Natural killer cell (primary cell): ENCODE measurements at regions of chr13 and their contacts with region 1.

Region 1: DNA sequence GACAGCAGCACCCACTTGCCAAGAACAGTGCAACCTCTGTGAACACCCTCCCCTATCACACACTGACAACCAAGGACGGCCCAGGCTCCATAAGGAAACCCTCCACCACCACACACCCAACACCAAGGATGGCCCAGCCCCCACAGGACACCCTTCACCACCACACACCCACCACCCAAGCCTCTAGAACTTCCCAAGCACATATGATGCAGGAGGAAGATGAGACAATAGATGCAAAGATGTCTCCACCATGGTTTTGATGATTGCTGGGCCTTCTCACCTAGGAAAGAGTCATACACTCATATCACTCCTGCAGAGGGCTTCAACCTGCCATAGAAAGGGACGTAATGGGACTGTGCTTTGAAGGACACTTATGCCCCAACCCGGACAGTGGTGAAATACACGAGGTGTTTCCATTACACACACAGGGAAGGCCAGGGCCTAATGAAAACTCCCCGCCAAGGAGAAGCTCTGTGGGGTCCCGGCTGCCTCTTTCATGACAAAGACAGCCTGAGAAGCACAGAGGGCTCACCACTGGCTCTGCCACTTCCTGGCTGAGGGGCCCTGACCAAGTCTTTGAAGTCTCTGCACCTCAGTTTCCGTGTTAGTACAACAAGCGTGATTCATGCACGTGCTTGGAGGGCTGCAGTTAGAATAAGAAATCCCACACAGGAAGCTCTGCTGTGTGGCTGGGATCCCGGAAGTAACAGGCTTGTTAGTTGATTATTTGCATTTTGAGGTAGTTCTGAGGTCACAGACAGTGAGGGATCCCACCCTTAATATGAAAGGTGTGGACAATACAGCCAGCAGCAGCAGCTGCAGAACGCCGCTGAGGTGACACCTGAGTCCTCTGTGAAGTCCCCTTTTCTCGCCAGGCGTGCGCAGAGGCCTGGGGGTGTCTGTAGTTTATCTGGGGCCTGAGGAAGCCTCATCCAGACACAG is 61.9 kb upstream of the ATP12A start:
- DNase-seq: peak; percentile 79 to 89
- ATAC-seq: peak; percentile 79 to 91 (median 85)
- H3K4me3 ChIP-seq: no peak overlapping the region
- H3K4me3 Mint-ChIP-seq: peak overlapping the region; percentile 56
- H3K27ac ChIP-seq: peak overlapping the region; percentile 92
- H3K27ac Mint-ChIP-seq: peak overlapping the region; percentile 98
- H3K4me1 ChIP-seq: peaks cover 72% of the 10 kb centered on the region
- H3K4me1 Mint-ChIP-seq: peaks cover 45 to 53% of the 10 kb centered on the region in 2 donors
- H3K27me3 ChIP-seq: no peaks in the 10 kb centered on the region
- H3K27me3 Mint-ChIP-seq: no peaks in the 10 kb centered on the region
- CTCF ChIP-seq: no peak

Region 2: GRCh38 chr13:24254146-24254841 is 364.0 kb before region 1 on chr13:
- intact Hi-C with region 1: loop called (anchors 5 kb)
- DNase-seq: peak; percentile 55 to 88
- ATAC-seq: peak; percentile 49 to 52 (median 51)
- H3K4me3 ChIP-seq: peak overlapping the region; percentile 72
- H3K4me3 Mint-ChIP-seq: peak overlapping the region; percentile 98
- H3K27ac ChIP-seq: peak overlapping the region; percentile 81
- H3K27ac Mint-ChIP-seq: peak overlapping the region; percentile 90 to 99
- H3K4me1 ChIP-seq: peaks cover 62% of the 10 kb centered on the region
- H3K4me1 Mint-ChIP-seq: peaks cover 76 to 88% of the 10 kb centered on the region in 2 donors
- H3K27me3 ChIP-seq: no peaks in the 10 kb centered on the region
- H3K27me3 Mint-ChIP-seq: no peaks in the 10 kb centered on the region
- CTCF ChIP-seq: no peak

Region 3: GRCh38 chr13:24270639-24271141 is 347.6 kb before region 1 on chr13:
- intact Hi-C with region 1: loop called (anchors 2 kb)
- DNase-seq: peak; percentile 63 to 82
- ATAC-seq: peak; percentile 15 to 56 (median 30)
- H3K4me3 ChIP-seq: peak overlapping the region; percentile 45
- H3K4me3 Mint-ChIP-seq: peak overlapping the region; percentile 94
- H3K27ac ChIP-seq: peak overlapping the region; percentile 96
- H3K27ac Mint-ChIP-seq: peak overlapping the region; percentile 95 to 98
- H3K4me1 ChIP-seq: peaks cover 81% of the 10 kb centered on the region
- H3K4me1 Mint-ChIP-seq: peaks cover 90 to 91% of the 10 kb centered on the region in 2 donors
- H3K27me3 ChIP-seq: no peaks in the 10 kb centered on the region
- H3K27me3 Mint-ChIP-seq: peaks cover 3 to 8% of the 10 kb centered on the region in 2 donors
- CTCF ChIP-seq: no peak

Region 4: DNA sequence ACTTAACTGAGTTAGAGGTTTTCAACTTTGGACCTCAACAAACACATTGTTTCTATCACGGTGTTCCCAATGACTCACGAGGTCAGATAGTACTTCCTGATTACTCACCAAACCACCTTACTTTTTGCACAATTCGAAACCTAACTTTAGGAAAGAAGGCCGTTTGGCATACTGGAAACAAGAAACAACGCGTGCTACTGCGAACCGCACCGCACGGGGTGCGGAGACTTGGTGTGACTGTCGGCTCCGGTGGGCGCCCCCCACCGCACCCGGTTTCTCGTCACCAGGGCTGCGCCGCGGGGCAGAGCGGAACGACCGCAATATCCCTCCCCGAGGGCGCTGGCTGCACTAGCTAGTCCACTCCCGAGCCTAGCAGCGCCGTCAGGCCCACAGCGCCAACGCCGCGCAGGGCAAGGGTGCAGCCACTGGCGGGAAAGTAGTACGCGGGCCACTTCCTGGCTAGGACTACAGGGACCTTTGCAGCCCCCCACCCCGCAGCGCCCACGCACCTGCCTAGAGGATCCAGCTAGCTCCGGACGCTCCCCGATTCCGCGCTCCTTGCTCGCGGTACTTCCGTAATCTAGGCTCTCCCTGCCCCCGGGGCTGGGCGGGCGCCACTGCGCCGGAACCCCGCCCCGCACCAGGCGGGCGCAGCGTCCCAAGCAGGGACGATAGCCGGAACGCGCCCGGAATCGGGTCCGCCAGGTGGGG is 105.9 kb before region 1 on chr13 and contains the start of gene PARP4:
- intact Hi-C with region 1: loop called (anchors 1 kb)
- DNase-seq: peak; percentile 65 to 82
- ATAC-seq: peak; percentile 71 to 86 (median 80)
- H3K4me3 ChIP-seq: peak within 1 kb of the TSS; percentile 96
- H3K4me3 Mint-ChIP-seq: peak within 1 kb of the TSS; percentile 97
- H3K27ac ChIP-seq: peak within 1 kb of the TSS; percentile 93
- H3K27ac Mint-ChIP-seq: peak within 1 kb of the TSS; percentile 92
- H3K4me1 ChIP-seq: peaks cover 12% of the 10 kb centered on the region
- H3K4me1 Mint-ChIP-seq: peaks cover 37 to 54% of the 10 kb centered on the region in 2 donors
- H3K27me3 ChIP-seq: no peaks in the 10 kb centered on the region
- H3K27me3 Mint-ChIP-seq: no peaks in the 10 kb centered on the region
- CTCF ChIP-seq: no peak
- total RNA-seq, gene PARP4: 83.5 to 90.1 (median 84.0) TPM

Region 5: GRCh38 chr13:24632382-24633121 is 14.3 kb after region 1 on chr13:
- intact Hi-C with region 1: no loop called
- DNase-seq: no peak
- ATAC-seq: no peak
- H3K4me3 ChIP-seq: no peak overlapping the region
- H3K4me3 Mint-ChIP-seq: no peak overlapping the region
- H3K27ac ChIP-seq: no peak overlapping the region
- H3K27ac Mint-ChIP-seq: no peak overlapping the region
- H3K4me1 ChIP-seq: peaks cover 9% of the 10 kb centered on the region
- H3K4me1 Mint-ChIP-seq: peaks cover 30% of the 10 kb centered on the region in 2 donors
- H3K27me3 ChIP-seq: no peaks in the 10 kb centered on the region
- H3K27me3 Mint-ChIP-seq: no peaks in the 10 kb centered on the region
- CTCF ChIP-seq: no peak

Region 6: DNA sequence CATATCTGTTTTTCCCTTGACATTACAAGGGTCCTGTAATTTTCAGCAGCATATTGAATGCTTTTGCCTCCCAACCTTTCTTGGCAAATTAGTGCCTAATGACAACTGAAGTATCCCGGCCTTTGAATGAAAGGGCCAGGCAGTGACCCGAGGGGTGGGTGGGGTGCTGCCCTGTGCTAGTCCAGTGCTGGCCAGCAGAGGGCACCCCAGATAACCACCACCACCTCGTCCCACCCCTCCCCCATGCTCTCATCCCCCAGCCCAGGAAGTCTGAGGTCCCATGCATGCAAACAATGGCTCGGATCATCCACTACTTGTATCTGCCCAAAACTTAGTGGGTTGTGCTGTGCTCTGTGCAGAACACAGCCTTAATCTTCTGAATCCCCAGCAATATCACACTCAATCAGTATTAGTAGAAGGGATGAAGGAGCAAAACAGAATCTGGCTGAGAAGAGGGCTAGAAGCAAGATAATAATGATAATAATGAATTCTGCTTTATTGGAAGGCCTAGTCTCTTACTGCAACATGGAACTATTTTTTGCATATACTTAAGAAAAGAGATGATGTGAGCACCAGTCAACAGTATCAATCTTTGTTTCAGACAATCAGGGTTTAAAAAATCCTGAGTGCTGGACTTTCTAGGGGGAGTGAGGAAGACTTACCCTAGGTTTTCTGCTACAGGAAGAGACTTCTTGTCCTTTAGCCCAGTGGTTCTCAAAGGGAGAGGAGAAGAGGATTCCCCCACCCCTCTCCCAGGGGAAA is 65.7 kb after region 1 on chr13:
- intact Hi-C with region 1: loop called (anchors 5 kb)
- DNase-seq: peak; percentile 31 to 81
- ATAC-seq: peak; percentile 78 to 81 (median 80)
- H3K4me3 ChIP-seq: no peak overlapping the region
- H3K4me3 Mint-ChIP-seq: peak overlapping the region; percentile 33
- H3K27ac ChIP-seq: no peak overlapping the region
- H3K27ac Mint-ChIP-seq: no peak overlapping the region
- H3K4me1 ChIP-seq: peaks cover 36% of the 10 kb centered on the region
- H3K4me1 Mint-ChIP-seq: peaks cover 32 to 40% of the 10 kb centered on the region in 2 donors
- H3K27me3 ChIP-seq: peaks cover 37% of the 10 kb centered on the region
- H3K27me3 Mint-ChIP-seq: peaks cover 46 to 52% of the 10 kb centered on the region in 2 donors
- CTCF ChIP-seq: peak; percentile 76

Region 7: DNA sequence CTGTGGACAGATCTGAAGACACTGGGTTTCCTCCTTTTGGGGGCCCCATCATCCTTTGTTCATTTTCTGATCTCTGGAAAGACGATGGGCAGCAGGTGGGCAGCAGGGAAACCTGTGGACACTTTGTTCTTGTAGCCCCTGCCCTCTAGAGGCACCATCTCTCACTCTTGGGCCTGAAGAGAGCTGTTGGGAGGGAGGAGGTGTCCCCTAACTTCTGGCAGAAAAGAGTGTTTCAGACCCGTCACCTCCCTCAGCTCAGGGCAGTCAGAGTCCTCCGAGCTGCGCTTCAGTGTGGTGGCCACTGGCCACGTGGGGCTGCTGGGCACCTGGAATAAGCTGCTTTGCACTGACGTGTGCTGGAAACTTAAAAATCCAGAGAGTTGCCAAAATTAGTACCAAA is 118.8 kb after region 1 on chr13:
- intact Hi-C with region 1: no loop called
- DNase-seq: no peak
- ATAC-seq: no peak
- H3K4me3 ChIP-seq: no peak overlapping the region
- H3K4me3 Mint-ChIP-seq: no peak overlapping the region
- H3K27ac ChIP-seq: no peak overlapping the region
- H3K27ac Mint-ChIP-seq: no peak overlapping the region
- H3K4me1 ChIP-seq: no peaks in the 10 kb centered on the region
- H3K4me1 Mint-ChIP-seq: no peaks in the 10 kb centered on the region
- H3K27me3 ChIP-seq: no peaks in the 10 kb centered on the region
- H3K27me3 Mint-ChIP-seq: no peaks in the 10 kb centered on the region
- CTCF ChIP-seq: no peak

Region 8: GRCh38 chr13:25352230-25352629 is 733.9 kb after region 1 on chr13:
- intact Hi-C with region 1: no loop called
- DNase-seq: no peak
- ATAC-seq: no peak
- H3K4me3 ChIP-seq: no peak overlapping the region
- H3K4me3 Mint-ChIP-seq: no peak overlapping the region
- H3K27ac ChIP-seq: no peak overlapping the region
- H3K27ac Mint-ChIP-seq: no peak overlapping the region
- H3K4me1 ChIP-seq: no peaks in the 10 kb centered on the region
- H3K4me1 Mint-ChIP-seq: no peaks in the 10 kb centered on the region
- H3K27me3 ChIP-seq: no peaks in the 10 kb centered on the region
- H3K27me3 Mint-ChIP-seq: peaks cover 17 to 24% of the 10 kb centered on the region in 2 donors
- CTCF ChIP-seq: no peak